PC-9 (cell line): ENCODE measurements at regions of chr10 and their contacts with region 1.

Region 1: DNA sequence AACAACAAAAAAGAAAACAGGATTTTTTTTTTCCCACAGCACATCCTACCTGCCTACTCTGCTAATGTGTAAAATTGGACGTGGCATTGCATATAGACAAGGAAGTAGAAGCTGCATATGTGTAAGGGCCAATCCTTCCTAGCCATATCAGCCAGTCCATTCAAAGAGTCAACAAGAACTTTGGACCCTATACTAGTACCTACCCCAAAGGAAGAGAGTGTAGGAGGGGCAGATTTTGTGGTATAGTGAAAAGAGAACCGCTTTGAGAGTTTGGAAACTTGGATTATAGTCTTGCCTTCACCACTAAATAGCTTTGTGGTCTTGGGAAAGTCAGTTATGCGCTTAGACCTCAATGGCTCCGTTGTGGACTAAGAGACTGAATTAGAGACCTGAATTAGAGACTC is 12.1 kb upstream of the MCU start:
- DNase-seq: no peak
- H3K4me3 ChIP-seq: no peak overlapping the region
- H3K27ac ChIP-seq: no peak overlapping the region
- H3K4me1 ChIP-seq: peaks cover 29% of the 10 kb centered on the region
- H3K27me3 ChIP-seq: no peaks in the 10 kb centered on the region
- CTCF ChIP-seq: no peak

Region 2: GRCh38 chr10:71850637-71851464 is 829.0 kb before region 1 on chr10 and contains the start of gene PSAP:
- CTCF ChIA-PET with region 1: interaction called, 15 read pairs
- POLR2A ChIA-PET with region 1: no interaction called
- intact Hi-C with region 1: no loop called
- DNase-seq: peak; percentile 97 to 100
- H3K4me3 ChIP-seq: peak within 1 kb of the TSS; percentile 87
- H3K27ac ChIP-seq: peak within 1 kb of the TSS; percentile 76
- H3K4me1 ChIP-seq: peaks cover 47% of the 10 kb centered on the region
- H3K27me3 ChIP-seq: no peaks in the 10 kb centered on the region
- CTCF ChIP-seq: no peak
- total RNA-seq, gene PSAP: 683 and 1,027 TPM in 2 replicates

Region 3: GRCh38 chr10:72637398-72637857 is 42.4 kb before region 1 on chr10:
- CTCF ChIA-PET with region 1: no interaction called
- POLR2A ChIA-PET with region 1: interaction called, 11 read pairs
- intact Hi-C with region 1: no loop called
- DNase-seq: peak in 1 of 2 experiments; percentile 19
- H3K4me3 ChIP-seq: no peak overlapping the region
- H3K27ac ChIP-seq: no peak overlapping the region
- H3K4me1 ChIP-seq: 0 out of 2 replicates have a peak, but pooled peaks cover 11% of the 10 kb centered on the region
- H3K27me3 ChIP-seq: no peaks in the 10 kb centered on the region
- CTCF ChIP-seq: no peak

Region 4: GRCh38 chr10:72918352-72918751 is 238.5 kb after region 1 on chr10:
- CTCF ChIA-PET with region 1: interaction called, 15 read pairs
- POLR2A ChIA-PET with region 1: no interaction called
- intact Hi-C with region 1: no loop called
- DNase-seq: no peak
- H3K4me3 ChIP-seq: no peak overlapping the region
- H3K27ac ChIP-seq: no peak overlapping the region
- H3K4me1 ChIP-seq: no peaks in the 10 kb centered on the region
- H3K27me3 ChIP-seq: no peaks in the 10 kb centered on the region
- CTCF ChIP-seq: no peak